Prostate gland (tissue), 2 donors: ENCODE measurements at regions of chr1 and their contacts with region 1.

Region 1: DNA sequence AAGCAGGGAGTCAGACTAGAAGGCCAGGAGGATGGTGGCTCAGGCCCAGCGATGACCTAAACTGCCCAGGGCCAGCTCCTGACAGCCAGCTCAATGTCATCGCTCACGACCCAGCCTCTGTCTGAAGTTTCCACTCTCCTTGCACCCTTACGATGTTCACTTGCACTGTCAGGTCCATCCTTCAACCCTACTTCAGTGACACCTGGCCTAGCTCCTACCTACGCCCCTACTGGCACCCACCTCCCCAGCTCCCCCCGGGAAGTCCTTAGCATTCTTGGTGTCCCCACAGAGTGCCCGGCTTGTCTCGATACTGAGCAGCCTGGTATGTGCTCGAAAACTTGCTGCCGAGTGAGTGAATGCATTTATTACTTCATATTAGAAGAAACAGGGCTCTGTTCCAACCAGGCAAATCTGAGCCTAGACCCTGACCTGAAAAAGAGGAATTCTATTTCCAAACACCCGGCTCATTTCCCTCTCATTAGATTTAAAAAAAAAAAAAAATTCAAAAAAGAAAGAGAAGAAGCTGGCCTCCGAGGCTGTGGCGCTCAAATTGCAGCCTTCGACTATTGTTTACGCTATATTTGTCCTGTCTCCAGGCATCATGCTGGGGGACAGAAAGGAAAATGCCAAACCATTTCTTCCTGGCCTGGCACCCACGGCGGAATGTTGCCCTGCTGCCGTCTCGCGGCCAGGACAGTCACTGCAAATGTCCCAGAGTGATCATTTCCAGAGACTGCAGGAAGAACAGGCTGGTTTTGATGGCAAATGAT is 29.8 kb upstream of the LRRC38 start:
- DNase-seq: peak; percentile 30
- H3K4me3 ChIP-seq: no peak overlapping the region
- H3K27ac ChIP-seq: no peak overlapping the region
- H3K4me1 ChIP-seq: no peaks in the 10 kb centered on the region
- H3K27me3 ChIP-seq: no peaks in the 10 kb centered on the region
- CTCF ChIP-seq: peak in 3 of 4 experiments; percentile 23 to 56 (median 45)
- POLR2A ChIP-seq: no peak

Region 2: DNA sequence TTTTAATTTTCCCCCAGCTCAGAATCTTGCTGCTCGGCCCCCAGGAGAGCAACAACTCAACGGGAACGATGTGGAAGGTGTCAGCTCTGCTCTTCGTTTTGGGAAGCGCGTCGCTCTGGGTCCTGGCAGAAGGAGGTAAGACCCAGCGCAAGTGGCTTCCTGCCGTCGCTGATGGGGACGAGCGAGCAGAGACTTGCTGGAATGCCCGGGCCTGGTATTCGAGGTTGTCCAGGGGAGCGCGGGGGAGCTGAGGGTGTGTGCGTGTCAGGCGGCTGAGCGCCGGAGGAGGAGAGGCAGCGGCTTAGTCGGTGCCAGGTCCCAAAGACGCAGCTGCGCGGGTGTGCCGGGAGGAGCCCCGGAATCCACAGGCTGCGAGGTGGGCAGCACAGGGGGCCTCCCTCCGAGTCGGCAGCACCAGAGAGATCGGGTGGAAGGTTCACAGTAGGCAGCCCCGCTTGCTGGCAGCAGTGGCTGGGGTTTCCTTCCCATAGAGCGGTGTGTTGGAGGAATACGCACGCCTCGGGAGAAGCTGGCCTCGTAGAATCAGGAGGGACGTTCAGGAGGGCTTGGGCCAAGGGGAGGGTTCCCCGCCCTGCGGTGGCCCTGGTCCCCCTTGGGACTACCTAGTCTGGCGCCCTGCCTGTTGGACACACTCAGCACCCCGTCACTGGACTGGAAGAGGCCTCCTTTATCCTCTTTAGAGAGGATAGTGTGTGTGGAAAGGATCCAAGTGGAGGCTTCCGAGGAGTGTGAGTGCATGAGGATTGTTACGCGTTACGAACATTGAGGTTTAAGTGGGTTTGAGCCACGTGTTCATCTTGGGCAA is 40.5 kb after region 1 on chr1:
- intact Hi-C with region 1: loop called (anchors 5 kb)
- DNase-seq: peak; percentile 59
- H3K4me3 ChIP-seq: peak overlapping the region; percentile 35 to 36
- H3K27ac ChIP-seq: peak overlapping the region; percentile 79 to 88
- H3K4me1 ChIP-seq: no peaks in the 10 kb centered on the region
- H3K27me3 ChIP-seq: peaks cover 13% of the 10 kb centered on the region
- CTCF ChIP-seq: no peak
- POLR2A ChIP-seq: peak; percentile 14